BJ (cell line): ENCODE measurements at regions of chr20 and their contacts with region 1.

Region 1: DNA sequence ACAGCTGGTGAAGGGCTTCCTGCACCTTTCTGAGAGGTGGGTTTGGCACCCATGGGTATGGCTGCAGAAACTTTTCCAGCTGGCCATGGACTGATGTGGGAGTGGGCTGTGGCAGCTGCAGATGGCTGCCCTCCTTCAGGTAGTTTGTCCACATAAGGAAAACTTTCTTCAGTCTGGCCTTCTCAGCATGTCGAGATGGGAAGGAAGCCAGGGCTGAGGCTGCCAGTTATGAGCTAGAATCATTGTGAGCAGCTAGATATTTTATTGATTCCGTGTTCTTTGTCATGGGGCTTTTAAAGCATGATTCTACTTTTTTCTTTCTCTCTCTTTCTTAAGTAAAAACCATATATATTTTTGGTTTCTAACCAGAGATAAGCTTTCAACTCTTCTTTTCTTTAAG is 16.6 kb downstream of the NKX2-4 start:
- DNase-seq: no peak
- H3K4me3 ChIP-seq: no peak overlapping the region
- H3K27me3 ChIP-seq: no peaks in the 10 kb centered on the region
- CTCF ChIP-seq: no peak

Region 2: GRCh38 chr20:21303061-21303871 is 77.4 kb before region 1 on chr20 and contains the start of gene XRN2:
- CTCF ChIA-PET with region 1: no interaction called
- POLR2A ChIA-PET with region 1: interaction called, 11 read pairs
- DNase-seq: peak; percentile 52
- H3K4me3 ChIP-seq: peak within 1 kb of the TSS; percentile 63
- H3K27me3 ChIP-seq: peaks cover 2% of the 10 kb centered on the region
- CTCF ChIP-seq: peak; percentile 19; the same call in 1 of the 2 replicates
- polyA plus RNA-seq, gene XRN2: 48.9 and 67.7 TPM in 2 replicates

Region 3: DNA sequence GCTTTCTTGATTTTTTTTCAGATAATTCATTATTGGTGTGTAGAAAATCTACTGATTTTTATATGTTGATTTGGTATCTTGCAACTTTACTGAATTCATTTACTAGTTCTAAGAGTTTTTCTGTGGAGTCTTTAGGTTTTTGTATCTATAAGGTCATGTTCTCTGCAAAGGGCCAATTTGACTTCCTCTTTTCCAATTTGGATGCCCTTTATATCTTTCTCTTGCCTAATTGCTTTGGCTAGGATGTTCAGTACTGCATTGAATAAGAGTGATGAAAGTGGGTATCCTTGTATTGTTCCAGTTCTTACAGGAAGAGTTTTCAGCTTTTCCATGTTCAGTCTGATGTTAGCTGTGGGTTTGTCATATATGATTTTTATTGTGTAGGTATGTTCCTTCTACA is 31.0 kb after region 1 on chr20:
- CTCF ChIA-PET with region 1: no interaction called
- POLR2A ChIA-PET with region 1: no interaction called
- DNase-seq: no peak
- H3K4me3 ChIP-seq: no peak overlapping the region
- H3K27me3 ChIP-seq: peaks cover 3% of the 10 kb centered on the region; the same call in 1 of the 2 replicates
- CTCF ChIP-seq: no peak